WTC11 (cell line): ENCODE measurements at regions of chr11 and their contacts with region 1.

Region 1: DNA sequence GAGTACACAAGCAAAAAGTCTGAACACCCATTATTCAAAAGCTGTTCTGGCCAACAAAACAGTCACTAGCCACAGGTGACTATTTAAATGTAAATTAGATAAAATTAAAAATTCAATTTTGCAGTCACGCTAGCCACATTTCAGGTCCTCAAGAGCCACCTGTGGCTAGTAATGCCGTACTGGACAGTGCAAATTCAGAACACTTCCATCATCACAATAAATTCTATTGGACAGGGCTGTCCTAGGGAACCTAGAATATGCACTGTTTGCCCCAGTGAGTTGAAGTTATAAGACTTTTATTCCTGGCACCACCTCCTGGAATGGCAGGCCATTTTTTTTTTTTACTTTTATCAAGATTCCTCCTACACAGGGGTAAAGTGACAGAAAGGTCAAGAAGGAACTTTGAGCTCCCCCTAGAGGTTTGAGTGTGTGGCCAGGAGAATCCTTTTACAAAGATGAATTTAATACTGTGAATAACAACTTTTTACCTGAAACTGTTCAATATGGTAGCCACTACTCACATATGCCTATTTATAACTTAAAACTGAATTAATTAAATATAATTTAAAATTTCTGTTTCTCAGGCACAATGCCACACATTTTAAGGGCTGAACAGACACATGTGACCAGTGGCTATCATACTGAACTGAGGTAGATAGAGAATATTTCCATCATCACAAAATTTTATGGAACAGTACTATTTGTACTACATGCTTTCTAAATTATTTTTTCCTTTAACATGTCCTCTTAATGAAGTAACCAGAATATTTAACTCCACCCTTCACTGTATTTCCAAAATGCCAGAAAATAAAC is 6.5 kb downstream of the MSANTD2 start:
- DNase-seq: peak; percentile 25
- ATAC-seq: peak; percentile 82
- H3K4me3 Mint-ChIP-seq: peak overlapping the region; percentile 50
- H3K27ac Mint-ChIP-seq: peak overlapping the region; percentile 22; the same call in 1 of the 2 replicates
- H3K4me1 Mint-ChIP-seq: peaks cover 76% of the 10 kb centered on the region
- H3K27me3 Mint-ChIP-seq: no peaks in the 10 kb centered on the region
- CTCF ChIP-seq: peak; percentile 51

Region 2: DNA sequence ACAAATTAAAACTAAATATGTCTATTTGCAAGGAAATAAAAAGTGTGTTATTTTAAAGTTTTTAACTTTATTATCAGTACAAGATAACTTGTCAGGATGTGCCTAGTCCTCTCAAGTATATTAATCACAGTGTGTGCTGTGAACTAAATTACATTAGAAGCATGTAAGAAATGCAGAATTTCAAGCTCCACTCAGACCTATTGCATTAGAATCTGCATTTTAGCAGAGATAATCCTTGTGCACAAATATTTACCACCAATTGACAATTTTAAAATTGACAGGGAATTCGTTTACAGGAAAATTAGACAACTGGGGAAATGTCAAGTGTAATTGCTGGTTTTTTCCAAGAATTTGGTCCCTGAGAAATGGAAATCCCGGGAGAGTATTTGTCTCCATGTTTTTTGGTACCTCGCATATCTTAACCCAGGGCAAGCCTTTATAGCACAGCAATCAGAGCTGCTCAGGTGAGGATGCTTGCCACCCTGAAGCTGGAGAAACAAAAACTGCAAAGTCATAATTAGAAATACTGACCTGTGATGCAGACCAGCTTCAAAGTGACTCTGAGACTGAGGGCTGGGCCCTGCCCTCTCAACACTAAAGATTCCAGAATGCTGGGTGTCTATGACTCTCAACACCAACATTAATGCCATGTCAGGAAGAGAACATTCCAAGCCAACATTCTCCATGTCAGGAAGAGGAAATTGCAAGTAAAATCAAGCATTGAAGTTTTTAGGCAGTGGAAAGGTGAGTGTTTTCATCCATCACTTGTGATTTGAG is 552.9 kb before region 1 on chr11 and contains the start of gene OR8G1:
- CTCF ChIA-PET with region 1: no interaction called
- POLR2A ChIA-PET with region 1: no interaction called
- DNase-seq: no peak
- ATAC-seq: no peak
- H3K4me3 Mint-ChIP-seq: no peak within 1 kb of the TSS
- H3K27ac Mint-ChIP-seq: no peak within 1 kb of the TSS
- H3K4me1 Mint-ChIP-seq: no peaks in the 10 kb centered on the region
- H3K27me3 Mint-ChIP-seq: no peaks in the 10 kb centered on the region
- CTCF ChIP-seq: no peak
- total RNA-seq, gene OR8G1: not detected in 3 replicates

Region 3: DNA sequence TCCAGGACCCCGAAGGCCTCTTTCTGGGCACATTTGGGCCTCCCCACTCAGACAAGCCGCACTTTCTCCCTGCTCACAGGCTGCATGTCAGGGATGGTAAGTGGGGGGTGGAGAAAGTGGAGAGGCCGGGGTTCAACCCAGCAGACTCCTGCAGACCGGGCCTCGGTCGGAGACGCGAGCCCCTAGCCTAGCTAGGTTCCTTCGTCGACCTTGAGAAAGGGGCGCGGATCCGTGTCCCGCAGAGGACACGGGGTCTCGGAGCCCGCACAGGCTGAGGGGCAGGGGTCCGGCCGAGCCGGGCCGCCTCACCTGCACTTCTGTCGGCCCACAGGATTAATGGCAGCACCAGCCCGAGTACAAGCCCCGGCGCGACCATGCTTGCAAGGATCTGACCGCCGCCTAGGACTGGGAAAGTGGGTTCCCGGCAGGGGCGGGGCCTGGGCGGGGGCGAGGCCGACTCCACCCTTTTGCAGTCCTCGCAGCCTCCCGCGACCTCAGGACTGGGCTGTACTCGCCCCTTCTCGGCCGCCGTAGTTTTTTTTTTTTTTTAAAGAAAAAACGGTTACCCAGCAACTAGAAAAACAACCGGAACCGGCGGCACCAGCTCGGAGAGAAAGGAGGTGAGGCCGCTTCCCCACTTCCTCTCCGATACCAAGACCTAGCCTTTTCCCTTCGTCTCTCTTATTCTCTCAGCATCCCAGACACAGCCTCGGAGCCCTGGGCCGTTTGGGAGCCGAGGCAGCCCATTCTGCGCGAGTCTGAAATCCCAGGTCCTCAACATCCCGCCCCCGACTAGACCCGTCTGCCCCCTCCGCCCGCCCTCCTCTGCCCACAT is 120.1 kb before region 1 on chr11 and contains the starts of genes SIAE and SPA17:
- CTCF ChIA-PET with region 1: interaction called, 18 read pairs
- POLR2A ChIA-PET with region 1: no interaction called
- DNase-seq: peak; percentile 96
- ATAC-seq: peak; percentile 97
- H3K4me3 Mint-ChIP-seq: peak within 1 kb of the TSS; percentile 90
- H3K27ac Mint-ChIP-seq: peak within 1 kb of the TSS; percentile 86
- H3K4me1 Mint-ChIP-seq: peaks cover 11% of the 10 kb centered on the region
- H3K27me3 Mint-ChIP-seq: peaks cover 23% of the 10 kb centered on the region
- CTCF ChIP-seq: no peak
- total RNA-seq, gene SIAE: 4.4 to 4.9 TPM (median 4.8 TPM) in 3 replicates
- total RNA-seq, gene SPA17: 3.5 to 3.8 TPM (median 3.5 TPM) in 3 replicates

Region 4: DNA sequence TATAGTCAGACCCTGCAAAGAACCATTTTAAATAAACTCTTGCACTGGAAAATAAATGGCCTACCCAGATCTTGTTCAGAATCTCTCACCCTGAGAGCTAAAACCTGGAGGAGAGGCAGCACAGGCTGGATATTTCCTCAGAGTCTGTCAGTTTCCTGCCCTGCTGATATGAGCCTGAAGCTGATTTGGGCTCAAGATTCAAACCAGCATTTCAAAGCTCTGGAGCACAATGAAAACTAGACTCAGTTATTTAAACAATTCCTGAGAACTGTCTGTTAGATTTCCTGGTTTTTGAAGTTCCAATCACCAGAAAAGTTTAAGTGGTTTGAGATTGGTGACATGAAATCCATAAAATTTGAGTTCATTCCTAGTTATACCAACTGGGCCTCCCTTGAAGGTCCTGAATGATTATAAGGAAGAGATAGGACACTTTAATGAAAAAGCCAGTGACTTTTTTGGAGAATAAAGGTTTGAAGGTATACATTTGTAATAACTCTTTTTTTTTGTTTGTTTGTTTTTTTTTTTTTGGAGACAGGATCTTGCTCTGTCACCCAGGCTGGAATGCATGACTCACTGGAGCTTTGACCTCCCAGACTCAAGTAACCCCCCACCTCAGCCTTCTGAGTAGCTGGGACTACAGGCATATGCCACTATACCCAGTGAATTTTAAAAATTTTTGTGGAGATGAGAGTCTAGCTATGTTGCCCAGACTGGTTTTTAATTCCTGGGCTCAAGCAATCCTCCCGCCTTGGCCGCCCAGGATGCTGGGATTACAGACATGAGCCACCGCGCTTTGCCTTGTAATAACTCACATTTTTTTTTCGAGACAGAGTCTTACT is 23.7 kb before region 1 on chr11:
- CTCF ChIA-PET with region 1: interaction called, 12 read pairs
- POLR2A ChIA-PET with region 1: no interaction called
- DNase-seq: no peak
- ATAC-seq: no peak
- H3K4me3 Mint-ChIP-seq: no peak overlapping the region
- H3K27ac Mint-ChIP-seq: no peak overlapping the region
- H3K4me1 Mint-ChIP-seq: no peaks in the 10 kb centered on the region
- H3K27me3 Mint-ChIP-seq: no peaks in the 10 kb centered on the region
- CTCF ChIP-seq: no peak

Region 5: DNA sequence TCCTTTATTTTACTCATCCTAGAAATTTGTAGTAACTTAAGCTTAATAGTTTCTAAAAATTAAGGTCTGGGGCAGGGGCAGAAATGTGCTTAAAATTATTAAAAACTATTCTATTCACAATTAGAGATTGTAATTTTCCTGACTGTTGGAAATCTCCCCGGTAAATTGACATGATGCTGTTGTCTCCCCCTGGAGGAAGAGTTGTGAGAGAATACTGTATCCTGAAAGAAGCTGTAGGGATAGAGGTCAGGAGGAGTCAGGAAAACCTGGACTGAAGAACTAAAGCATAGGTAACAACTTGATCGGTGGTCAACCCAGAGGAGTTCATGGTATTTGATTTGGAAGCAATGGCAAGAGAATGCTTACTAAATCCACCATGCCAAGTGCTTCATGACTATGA is 15.4 kb before region 1 on chr11:
- CTCF ChIA-PET with region 1: interaction called, 28 read pairs
- POLR2A ChIA-PET with region 1: no interaction called
- DNase-seq: no peak
- ATAC-seq: peak; percentile 34; the same call in 1 of the 2 replicates
- H3K4me3 Mint-ChIP-seq: no peak overlapping the region
- H3K27ac Mint-ChIP-seq: no peak overlapping the region
- H3K4me1 Mint-ChIP-seq: no peaks in the 10 kb centered on the region
- H3K27me3 Mint-ChIP-seq: no peaks in the 10 kb centered on the region
- CTCF ChIP-seq: no peak

Region 6: GRCh38 chr11:124812876-124813275 is 19.2 kb after region 1 on chr11:
- CTCF ChIA-PET with region 1: interaction called, 15 read pairs
- POLR2A ChIA-PET with region 1: no interaction called
- DNase-seq: no peak
- ATAC-seq: no peak
- H3K4me3 Mint-ChIP-seq: no peak overlapping the region
- H3K27ac Mint-ChIP-seq: no peak overlapping the region
- H3K4me1 Mint-ChIP-seq: no peaks in the 10 kb centered on the region; the same call in 1 of the 2 replicates
- H3K27me3 Mint-ChIP-seq: peaks cover 10% of the 10 kb centered on the region
- CTCF ChIP-seq: no peak

Region 7: GRCh38 chr11:124837491-124837856 is 43.8 kb after region 1 on chr11:
- CTCF ChIA-PET with region 1: interaction called, 32 read pairs
- POLR2A ChIA-PET with region 1: interaction called, 7 read pairs
- DNase-seq: no peak
- ATAC-seq: peak; percentile 40
- H3K4me3 Mint-ChIP-seq: no peak overlapping the region
- H3K27ac Mint-ChIP-seq: no peak overlapping the region
- H3K4me1 Mint-ChIP-seq: peaks cover 32% of the 10 kb centered on the region
- H3K27me3 Mint-ChIP-seq: peaks cover 34% of the 10 kb centered on the region
- CTCF ChIP-seq: no peak; the same call in 1 of the 2 replicates

Region 8: DNA sequence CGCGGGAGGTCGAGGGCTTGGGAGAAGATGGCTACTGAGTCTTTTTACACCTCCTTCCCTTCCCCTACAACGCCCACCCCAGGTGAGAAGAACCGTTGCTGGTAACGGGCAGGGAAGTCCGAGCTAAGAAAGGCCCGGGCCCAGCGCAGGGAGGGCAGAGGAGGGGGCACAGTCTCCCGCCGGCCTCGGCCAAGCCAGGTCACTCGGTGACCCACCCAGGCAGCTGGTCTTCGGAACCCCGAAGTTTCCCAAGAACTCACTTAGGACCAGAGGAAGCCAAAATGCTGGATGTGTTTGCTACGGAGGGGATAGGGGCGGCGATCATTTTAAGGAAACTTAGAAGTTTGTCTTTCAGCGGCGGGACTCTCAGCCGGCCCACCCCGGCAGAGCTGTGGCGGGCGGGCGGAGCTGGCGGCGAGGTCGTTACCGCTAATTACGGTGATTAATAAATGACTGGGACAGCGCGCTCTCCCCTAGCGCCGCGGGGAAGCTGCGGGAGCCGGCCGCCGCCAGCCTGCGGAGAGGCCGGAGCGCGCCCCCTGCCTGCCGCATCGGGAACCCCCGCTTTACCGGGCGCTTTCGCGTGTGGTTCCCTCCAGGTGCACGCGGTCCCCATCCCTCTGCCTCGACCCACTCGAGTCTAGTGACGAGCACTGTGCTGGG is 72.4 kb after region 1 on chr11:
- CTCF ChIA-PET with region 1: interaction called, 19 read pairs
- POLR2A ChIA-PET with region 1: no interaction called
- DNase-seq: peak; percentile 76
- ATAC-seq: peak; percentile 10; the same call in 1 of the 2 replicates
- H3K4me3 Mint-ChIP-seq: peak overlapping the region; percentile 60
- H3K27ac Mint-ChIP-seq: no peak overlapping the region
- H3K4me1 Mint-ChIP-seq: peaks cover 40% of the 10 kb centered on the region
- H3K27me3 Mint-ChIP-seq: peaks cover 100% of the 10 kb centered on the region
- CTCF ChIP-seq: peak; percentile 87